ENCODE measurements at regions of chr3 and their contacts with region 1.

Region 1: DNA sequence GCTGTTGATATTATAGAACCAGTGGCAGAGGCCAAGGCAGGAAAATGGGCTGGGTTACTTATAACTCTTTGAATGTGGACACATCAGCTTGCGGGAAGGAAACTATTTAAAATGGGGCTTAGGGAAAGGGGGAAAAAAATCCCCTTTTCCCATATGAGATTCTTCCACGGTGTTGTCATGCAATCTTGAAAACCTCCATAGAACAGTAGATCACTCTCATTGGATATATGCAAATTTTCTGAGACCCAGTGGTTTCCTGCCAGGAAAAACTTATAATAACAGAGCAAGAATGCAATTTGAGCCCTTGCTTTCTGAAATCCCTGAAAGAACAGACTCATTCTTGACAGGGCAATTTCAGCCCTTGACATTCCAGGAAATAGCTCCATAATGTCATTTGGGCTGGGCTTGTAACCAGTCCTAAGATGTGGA is 31.1 kb downstream of the TMEM212 start:
- DNase-seq: peak; percentile 99
- ATAC-seq: peak; percentile 89
- H3K4me3 ChIP-seq: no peak overlapping the region
- H3K27ac ChIP-seq: peak overlapping the region; percentile 85; the same call in 1 of the 2 replicates
- H3K4me1 ChIP-seq: peaks cover 31% of the 10 kb centered on the region
- H3K27me3 ChIP-seq: no peaks in the 10 kb centered on the region
- CTCF ChIP-seq: no peak
- POLR2A ChIP-seq: peak; percentile 68; the same call in 1 of the 2 replicates
- RAD21 ChIP-seq: 0 out of 2 replicates have a peak, but pooled peaks have one; percentile 3

Region 2: GRCh38 chr3:171809821-171810628 is 64.2 kb before region 1 on chr3 and contains the start of gene PLD1:
- CTCF ChIA-PET with region 1: no interaction called
- POLR2A ChIA-PET with region 1: no interaction called
- dilution Hi-C with region 1: no loop called
- in situ Hi-C with region 1: no loop called
- intact Hi-C with region 1: loop called (anchors 1 kb)
- DNase-seq: peak; percentile 95
- ATAC-seq: peak; percentile 83
- H3K4me3 ChIP-seq: peak within 1 kb of the TSS; percentile 76
- H3K27ac ChIP-seq: peak within 1 kb of the TSS; percentile 96
- H3K4me1 ChIP-seq: peaks cover 15% of the 10 kb centered on the region
- H3K27me3 ChIP-seq: no peaks in the 10 kb centered on the region
- CTCF ChIP-seq: no peak
- POLR2A ChIP-seq: peak; percentile 71
- RAD21 ChIP-seq: peak; percentile 47
- total RNA-seq, gene PLD1: 9.2 and 9.7 TPM in 2 replicates

Region 3: DNA sequence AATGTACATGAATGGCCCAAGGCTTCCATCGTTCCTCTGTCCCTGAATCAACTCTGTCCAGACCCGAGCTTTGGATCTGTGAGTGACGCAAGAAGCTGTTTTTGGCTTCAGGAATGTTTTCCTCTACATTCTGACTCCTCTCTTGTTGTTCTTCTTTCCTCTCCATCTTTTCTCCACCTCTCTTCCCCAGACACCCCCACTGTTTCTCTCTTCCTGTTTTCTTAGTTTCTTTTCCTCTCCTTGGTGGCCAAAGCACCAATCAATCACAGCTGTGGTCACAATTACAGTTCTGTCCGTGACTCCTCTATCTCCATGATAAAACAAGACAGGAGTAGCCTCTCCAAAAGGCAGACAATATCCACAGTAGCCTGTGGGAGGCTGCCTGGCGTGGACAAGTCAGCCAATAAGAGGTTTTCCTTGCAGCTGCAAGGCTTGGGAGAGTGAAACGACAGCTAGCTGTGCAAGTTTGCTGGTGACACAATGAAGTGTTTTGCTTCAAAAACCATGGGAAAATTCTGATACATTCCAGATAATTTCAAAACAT is 36.0 kb before region 1 on chr3:
- CTCF ChIA-PET with region 1: no interaction called
- POLR2A ChIA-PET with region 1: no interaction called
- dilution Hi-C with region 1: no loop called
- in situ Hi-C with region 1: no loop called
- intact Hi-C with region 1: loop called (anchors 1 kb)
- DNase-seq: peak; percentile 78
- ATAC-seq: peak; percentile 82
- H3K4me3 ChIP-seq: peak overlapping the region; percentile 24; the same call in 1 of the 2 replicates
- H3K27ac ChIP-seq: peak overlapping the region; percentile 91
- H3K4me1 ChIP-seq: peaks cover 11% of the 10 kb centered on the region
- H3K27me3 ChIP-seq: no peaks in the 10 kb centered on the region
- CTCF ChIP-seq: 0 out of 2 replicates have a peak, but pooled peaks have one; percentile 2
- POLR2A ChIP-seq: no peak
- RAD21 ChIP-seq: 0 out of 2 replicates have a peak, but pooled peaks have one; percentile 2

Region 4: DNA sequence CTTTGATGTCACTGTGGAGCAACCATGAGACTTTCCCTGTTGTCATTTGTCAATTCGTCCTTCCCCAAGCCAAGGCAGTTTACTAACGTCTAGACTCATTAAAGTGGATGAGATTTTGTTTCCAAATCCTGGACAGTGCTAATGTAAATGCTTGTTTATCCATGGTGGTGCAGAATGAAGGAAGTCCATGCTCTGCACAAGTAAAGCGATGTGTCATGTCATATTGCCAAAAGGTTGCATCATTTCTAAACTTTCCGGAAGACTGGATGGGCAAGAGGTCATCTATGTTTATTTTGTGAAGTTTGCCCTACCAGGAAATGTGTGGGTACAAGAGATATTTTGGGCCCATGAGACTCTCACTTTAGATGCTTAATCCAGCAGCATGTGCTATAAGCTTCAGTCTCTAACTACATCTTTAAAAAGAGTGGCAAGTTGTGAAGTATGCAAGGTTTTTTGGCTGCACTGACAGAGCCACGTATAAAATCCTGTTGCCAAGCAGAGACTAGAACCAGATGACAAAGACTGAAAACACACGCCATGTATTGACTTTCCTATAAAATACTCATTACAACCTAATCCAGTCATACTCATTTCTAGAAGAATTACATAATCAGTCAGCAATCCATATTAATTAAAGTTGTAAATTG is 93.0 kb after region 1 on chr3:
- CTCF ChIA-PET with region 1: no interaction called
- POLR2A ChIA-PET with region 1: no interaction called
- dilution Hi-C with region 1: no loop called
- in situ Hi-C with region 1: no loop called
- intact Hi-C with region 1: loop called (anchors 5 kb)
- DNase-seq: peak; percentile 90
- ATAC-seq: peak; percentile 71
- H3K4me3 ChIP-seq: no peak overlapping the region
- H3K27ac ChIP-seq: peak overlapping the region; percentile 85
- H3K4me1 ChIP-seq: peaks cover 13% of the 10 kb centered on the region
- H3K27me3 ChIP-seq: no peaks in the 10 kb centered on the region
- CTCF ChIP-seq: no peak
- POLR2A ChIP-seq: no peak
- RAD21 ChIP-seq: no peak; the same call in 1 of the 2 replicates

Region 5: DNA sequence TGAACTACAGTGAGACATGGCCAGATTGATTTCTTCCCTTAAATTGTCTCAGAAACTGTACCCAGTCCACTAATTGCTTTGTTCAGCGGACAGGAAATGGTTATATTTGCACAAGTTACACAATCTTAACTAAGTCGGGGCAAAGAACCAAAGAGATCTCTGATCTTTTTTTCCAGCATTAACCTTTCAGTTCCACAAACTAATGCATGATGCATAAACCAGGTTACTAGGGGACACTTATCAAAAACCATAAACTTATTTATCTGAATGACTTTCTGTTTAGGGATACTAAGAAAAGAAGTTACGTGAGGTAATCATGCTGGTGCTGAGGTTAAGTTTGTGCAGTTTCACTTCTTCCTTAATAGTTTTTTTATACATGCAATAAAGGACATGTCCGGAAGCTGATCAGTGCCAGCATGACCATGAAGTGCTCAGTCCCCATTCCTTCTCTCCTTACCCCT is 187.5 kb after region 1 on chr3:
- CTCF ChIA-PET with region 1: no interaction called
- POLR2A ChIA-PET with region 1: no interaction called
- dilution Hi-C with region 1: no loop called
- in situ Hi-C with region 1: no loop called
- intact Hi-C with region 1: no loop called
- DNase-seq: peak; percentile 28
- ATAC-seq: no peak; the same call in 1 of the 2 replicates
- H3K4me3 ChIP-seq: no peak overlapping the region
- H3K27ac ChIP-seq: no peak overlapping the region; the same call in 1 of the 2 replicates
- H3K4me1 ChIP-seq: peaks cover 14% of the 10 kb centered on the region
- H3K27me3 ChIP-seq: no peaks in the 10 kb centered on the region
- CTCF ChIP-seq: no peak
- POLR2A ChIP-seq: no peak
- RAD21 ChIP-seq: no peak

Region 6: GRCh38 chr3:172153335-172153861 is 279.1 kb after region 1 on chr3:
- CTCF ChIA-PET with region 1: no interaction called
- POLR2A ChIA-PET with region 1: no interaction called
- dilution Hi-C with region 1: no loop called
- in situ Hi-C with region 1: no loop called
- intact Hi-C with region 1: no loop called
- DNase-seq: peak; percentile 99
- ATAC-seq: peak; percentile 97
- H3K4me3 ChIP-seq: no peak overlapping the region
- H3K27ac ChIP-seq: peak overlapping the region; percentile 75
- H3K4me1 ChIP-seq: peaks cover 22% of the 10 kb centered on the region
- H3K27me3 ChIP-seq: no peaks in the 10 kb centered on the region
- CTCF ChIP-seq: no peak
- POLR2A ChIP-seq: peak; percentile 80
- RAD21 ChIP-seq: peak; percentile 39; the same call in 1 of the 2 replicates